OCI-LY7 (cell line): ENCODE measurements at regions of chr20 and their contacts with region 1.

Region 1: DNA sequence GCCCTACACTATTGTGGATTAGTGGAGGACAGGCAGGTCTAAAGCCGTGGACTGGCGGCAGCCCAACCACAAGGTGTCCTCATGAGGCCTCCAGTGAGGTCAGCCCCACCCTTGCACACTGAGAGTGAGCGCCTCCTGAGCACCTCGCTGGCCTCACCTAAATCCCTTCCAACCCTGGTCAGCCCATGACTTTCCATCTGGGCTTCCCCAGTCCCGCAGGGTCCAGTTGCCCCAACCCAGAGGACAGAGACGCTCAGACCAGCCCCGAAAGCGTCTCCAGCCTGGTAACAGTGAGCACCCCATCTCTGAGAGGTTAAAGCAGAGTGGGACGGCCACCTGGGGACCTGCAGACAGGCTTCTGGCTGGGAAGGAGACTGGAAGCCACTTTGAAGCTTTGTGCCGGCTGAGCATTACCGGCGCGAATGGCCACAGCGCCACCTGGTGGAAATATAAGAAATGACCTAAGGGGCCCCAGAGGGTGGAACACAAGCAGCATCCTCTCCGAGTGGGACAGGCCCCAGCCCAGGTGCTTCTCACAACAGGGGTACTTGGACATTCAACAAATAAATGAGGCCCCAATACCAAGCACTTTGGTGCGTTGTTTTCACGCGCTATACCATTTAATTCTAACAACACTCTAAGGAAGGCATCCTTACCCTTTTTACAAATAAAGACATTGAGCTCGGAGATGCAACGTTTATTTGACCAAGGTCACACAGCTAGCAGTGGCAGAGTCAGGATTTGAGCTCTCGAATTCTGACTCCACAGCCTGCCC is 65.7 kb upstream of the TOP1 start:
- DNase-seq: peak; percentile 80
- H3K4me3 ChIP-seq: no peak overlapping the region
- H3K27ac ChIP-seq: no peak overlapping the region
- H3K4me1 ChIP-seq: peaks cover 18% of the 10 kb centered on the region
- CTCF ChIP-seq: peak; percentile 95

Region 2: DNA sequence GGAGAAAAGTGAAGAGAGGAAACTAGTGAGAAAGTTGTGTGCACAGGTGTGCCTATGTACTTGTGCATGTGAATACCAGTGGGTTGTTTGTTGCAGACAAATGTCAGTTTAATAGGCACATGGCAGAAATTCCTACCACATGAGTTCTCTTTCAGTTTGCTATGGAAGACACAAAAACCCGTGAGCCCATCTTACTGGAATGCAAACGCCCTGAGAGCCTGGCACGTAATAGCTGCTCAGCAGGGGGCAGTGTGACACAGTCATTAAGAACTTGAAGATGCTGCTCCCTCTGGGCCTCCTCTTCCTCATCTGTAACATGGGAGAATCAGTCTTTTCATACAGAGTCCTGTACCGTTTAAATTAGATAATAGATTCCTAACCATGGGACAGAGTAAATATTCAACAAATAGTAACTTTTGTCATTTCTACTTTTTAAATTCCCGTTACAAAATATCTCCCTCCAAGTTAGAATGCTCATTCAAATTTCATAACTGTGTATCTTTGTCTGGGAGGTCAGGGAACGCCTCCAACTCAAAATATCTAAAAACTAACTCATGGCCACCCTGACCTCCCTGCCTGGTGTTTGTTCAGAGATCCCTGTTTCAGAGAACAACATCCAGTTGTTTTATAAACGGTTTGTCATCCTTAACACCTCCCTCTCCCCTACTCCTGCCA is 1076.8 kb before region 1 on chr20:
- CTCF ChIA-PET with region 1: no interaction called
- POLR2A ChIA-PET with region 1: no interaction called
- intact Hi-C with region 1: loop called (anchors 10 kb)
- DNase-seq: peak; percentile 41
- H3K4me3 ChIP-seq: no peak overlapping the region
- H3K27ac ChIP-seq: no peak overlapping the region
- H3K4me1 ChIP-seq: no peaks in the 10 kb centered on the region
- CTCF ChIP-seq: peak; percentile 77

Region 3: DNA sequence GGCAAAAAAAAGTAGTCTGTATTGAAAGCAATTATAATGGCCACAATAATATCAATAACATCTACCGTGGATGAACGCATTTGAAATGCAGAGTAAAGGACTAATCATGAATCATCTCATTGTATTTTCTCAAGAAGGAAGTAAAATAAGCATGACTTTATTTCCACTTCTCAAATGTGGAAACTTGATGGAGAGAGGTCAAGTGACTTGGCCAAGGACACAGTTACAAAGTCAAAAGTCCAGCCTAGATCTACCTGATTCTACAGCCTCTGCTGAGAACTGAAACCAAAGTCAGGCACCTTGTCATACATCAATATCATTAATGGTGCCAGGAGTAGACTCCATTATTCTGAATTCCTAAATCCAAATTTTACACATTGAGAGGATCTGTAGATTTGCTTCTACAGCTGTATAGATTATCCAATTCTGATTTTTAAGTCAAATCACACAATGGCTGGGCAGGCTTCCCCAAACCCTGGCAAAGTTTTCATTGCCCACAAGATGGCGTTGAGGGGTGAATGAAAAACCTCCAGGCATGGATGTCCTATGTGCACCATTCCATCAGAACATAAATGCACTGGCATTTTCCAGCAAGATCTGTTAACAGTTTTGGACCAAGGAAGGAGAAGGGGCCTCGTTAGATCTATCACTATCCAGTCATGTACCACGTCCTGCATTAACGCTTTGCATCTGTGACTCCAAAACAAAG is 696.9 kb before region 1 on chr20:
- CTCF ChIA-PET with region 1: no interaction called
- POLR2A ChIA-PET with region 1: no interaction called
- intact Hi-C with region 1: loop called (anchors 10 kb)
- DNase-seq: peak; percentile 18
- H3K4me3 ChIP-seq: no peak overlapping the region
- H3K27ac ChIP-seq: no peak overlapping the region
- H3K4me1 ChIP-seq: no peaks in the 10 kb centered on the region
- CTCF ChIP-seq: peak; percentile 68

Region 4: DNA sequence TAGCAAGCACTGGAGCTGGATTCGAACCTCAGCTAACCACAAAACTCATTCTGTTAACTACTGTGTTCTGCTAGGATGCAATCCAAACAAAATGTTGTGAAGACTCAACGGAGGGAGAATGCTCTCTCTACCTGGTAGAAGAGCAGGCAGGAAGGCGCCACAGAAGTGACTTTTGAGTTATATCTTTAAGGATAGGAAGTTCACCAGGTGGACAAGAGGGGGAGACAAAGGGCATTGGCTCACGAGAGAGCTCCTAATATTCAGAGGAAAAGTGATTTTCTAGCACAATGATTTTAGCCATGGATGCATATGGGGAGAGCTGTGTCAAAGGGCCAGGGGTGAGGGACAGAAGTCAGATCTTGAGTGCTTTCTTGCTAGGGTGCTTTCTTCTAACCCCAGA is 165.5 kb before region 1 on chr20:
- CTCF ChIA-PET with region 1: interaction called, 5 read pairs
- POLR2A ChIA-PET with region 1: interaction called, 3 read pairs
- intact Hi-C with region 1: loop called (anchors 5 kb)
- DNase-seq: peak; percentile 61
- H3K4me3 ChIP-seq: no peak overlapping the region
- H3K27ac ChIP-seq: no peak overlapping the region
- H3K4me1 ChIP-seq: no peaks in the 10 kb centered on the region
- CTCF ChIP-seq: peak; percentile 86

Region 5: GRCh38 chr20:40860487-40860902 is 102.4 kb before region 1 on chr20:
- CTCF ChIA-PET with region 1: no interaction called
- POLR2A ChIA-PET with region 1: no interaction called
- intact Hi-C with region 1: no loop called
- DNase-seq: no peak
- H3K4me3 ChIP-seq: no peak overlapping the region
- H3K27ac ChIP-seq: no peak overlapping the region
- H3K4me1 ChIP-seq: no peaks in the 10 kb centered on the region
- CTCF ChIP-seq: no peak

Region 6: GRCh38 chr20:40913224-40914185 is 49.4 kb before region 1 on chr20:
- CTCF ChIA-PET with region 1: no interaction called
- POLR2A ChIA-PET with region 1: no interaction called
- intact Hi-C with region 1: no loop called
- DNase-seq: no peak
- H3K4me3 ChIP-seq: no peak overlapping the region
- H3K27ac ChIP-seq: no peak overlapping the region
- H3K4me1 ChIP-seq: peaks cover 7% of the 10 kb centered on the region
- CTCF ChIP-seq: no peak

Region 7: GRCh38 chr20:41078329-41078728 is 115.4 kb after region 1 on chr20:
- CTCF ChIA-PET with region 1: no interaction called
- POLR2A ChIA-PET with region 1: interaction called, 3 read pairs
- intact Hi-C with region 1: loop called (anchors 1 kb)
- DNase-seq: peak; percentile 70
- H3K4me3 ChIP-seq: no peak overlapping the region
- H3K27ac ChIP-seq: peak overlapping the region; percentile 27
- H3K4me1 ChIP-seq: peaks cover 40% of the 10 kb centered on the region
- CTCF ChIP-seq: peak; percentile 81

Region 8: DNA sequence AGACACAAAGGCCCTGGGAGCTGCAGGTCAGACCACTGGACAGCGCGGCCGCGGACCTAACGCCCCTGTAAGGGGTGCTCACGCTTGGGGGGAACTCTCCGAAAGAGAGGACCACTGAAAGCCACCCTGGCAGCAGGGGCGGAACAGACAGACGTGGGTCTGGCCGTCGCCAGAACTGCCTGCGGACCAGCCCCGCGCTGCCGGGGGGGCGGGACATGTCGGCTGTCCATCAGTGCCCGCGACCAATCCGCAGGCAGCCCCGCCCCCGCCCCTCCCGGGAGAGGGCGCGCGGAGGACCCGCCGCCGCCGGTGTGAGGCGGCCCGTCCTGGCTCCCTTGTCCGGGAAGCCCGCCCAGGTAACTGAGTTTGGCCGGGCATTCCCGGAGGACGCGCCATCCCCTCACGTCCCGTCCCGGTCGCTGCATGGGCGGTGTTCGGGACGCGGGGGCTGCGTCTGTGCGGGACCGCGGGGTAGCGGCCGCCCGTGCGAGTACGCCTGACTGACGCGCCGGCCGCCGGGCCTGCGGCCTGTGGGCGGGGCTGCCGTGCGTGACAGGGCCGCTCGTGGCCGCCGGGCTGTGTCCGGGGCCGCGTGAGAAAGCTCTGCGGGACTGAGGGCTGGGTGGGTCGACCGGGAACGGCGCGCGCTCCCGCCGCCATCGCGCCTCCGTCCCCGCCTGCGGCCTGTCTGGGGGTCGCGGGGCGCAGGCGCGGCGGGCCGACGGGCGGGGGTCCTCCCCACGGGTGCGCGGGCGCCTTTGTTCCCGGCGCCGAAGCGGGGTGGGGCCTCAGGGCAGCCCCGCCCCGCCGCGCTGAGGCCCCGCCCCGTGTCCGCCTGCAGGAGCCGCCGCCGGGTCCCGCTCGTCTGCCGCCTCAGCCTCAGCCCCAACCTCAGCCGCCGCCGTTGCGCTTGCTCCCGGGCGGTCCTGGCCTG is 174.0 kb after region 1 on chr20 and contains the start of gene PLCG1:
- CTCF ChIA-PET with region 1: interaction called, 3 read pairs
- POLR2A ChIA-PET with region 1: no interaction called
- intact Hi-C with region 1: loop called (anchors 2 kb)
- DNase-seq: peak; percentile 88
- H3K4me3 ChIP-seq: peak within 1 kb of the TSS; percentile 74
- H3K27ac ChIP-seq: peak within 1 kb of the TSS; percentile 73
- H3K4me1 ChIP-seq: peaks cover 59% of the 10 kb centered on the region
- CTCF ChIP-seq: no peak
- total RNA-seq, gene PLCG1: 92.6 and 103 TPM in 2 replicates

Region 9: DNA sequence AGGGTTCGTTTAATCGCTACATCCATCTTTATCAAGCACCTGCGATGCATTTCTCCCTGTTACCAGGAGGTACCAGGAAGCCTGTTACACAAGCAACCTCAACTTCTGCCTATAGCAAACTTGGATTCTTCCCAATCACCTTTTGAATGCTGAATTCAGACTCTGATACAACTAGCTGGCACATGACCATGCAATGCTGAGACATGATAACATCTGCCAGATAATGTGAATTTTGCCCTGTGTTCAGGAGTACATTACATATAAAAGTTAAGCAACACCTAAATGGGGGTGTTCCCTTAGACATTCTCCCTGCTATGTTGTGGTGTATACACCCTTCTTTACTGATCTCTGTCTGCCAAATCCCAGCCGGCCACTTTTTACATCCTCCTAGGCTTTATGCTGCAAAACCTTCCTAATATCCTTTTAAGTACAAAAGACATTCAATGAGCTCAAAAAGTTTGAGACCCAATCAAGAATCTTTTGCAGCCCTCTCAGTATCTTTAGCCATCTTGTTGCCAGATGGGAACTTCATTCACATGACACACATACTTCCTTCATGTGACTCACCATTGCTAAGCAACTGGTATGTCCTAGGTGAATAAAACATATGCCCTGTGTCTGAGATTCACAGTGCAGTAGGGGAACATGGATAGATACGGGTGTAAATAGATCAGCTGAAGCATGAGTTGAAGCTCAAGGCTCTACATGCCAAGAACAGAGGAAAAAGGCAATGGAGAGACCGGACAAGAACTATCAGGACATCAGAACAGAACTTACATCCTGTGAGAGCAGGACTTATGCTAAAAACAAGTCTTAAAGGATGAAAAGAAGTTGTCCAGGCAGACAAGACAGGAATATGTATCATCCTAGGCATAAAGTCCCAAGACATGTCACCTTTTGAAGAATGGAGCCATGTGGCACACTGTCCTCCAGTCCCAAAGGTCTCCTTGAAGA is 270.3 kb after region 1 on chr20:
- CTCF ChIA-PET with region 1: no interaction called
- POLR2A ChIA-PET with region 1: no interaction called
- intact Hi-C with region 1: loop called (anchors 5 kb)
- DNase-seq: no peak
- H3K4me3 ChIP-seq: no peak overlapping the region
- H3K27ac ChIP-seq: no peak overlapping the region
- H3K4me1 ChIP-seq: no peaks in the 10 kb centered on the region
- CTCF ChIP-seq: no peak

Region 10: DNA sequence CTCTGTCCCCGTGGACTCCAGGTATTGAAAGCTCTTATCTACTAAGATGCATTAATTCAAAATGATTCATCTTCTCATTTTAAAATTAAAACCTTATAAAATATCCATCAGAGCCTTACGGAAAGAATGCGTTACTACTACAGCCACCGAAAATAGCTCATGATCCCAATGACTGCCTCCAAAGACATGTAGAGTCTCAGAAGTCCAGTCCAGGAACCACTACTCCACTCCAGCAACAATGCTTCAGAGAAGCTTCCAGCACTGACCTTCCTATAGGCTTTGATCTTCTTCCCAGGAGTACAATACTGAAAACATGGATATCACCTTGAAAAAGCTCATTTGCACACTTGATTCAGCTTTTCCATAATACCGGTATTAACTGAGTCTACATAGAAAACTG is 560.9 kb after region 1 on chr20:
- CTCF ChIA-PET with region 1: no interaction called
- POLR2A ChIA-PET with region 1: no interaction called
- intact Hi-C with region 1: no loop called
- DNase-seq: no peak
- H3K4me3 ChIP-seq: no peak overlapping the region
- H3K27ac ChIP-seq: no peak overlapping the region
- H3K4me1 ChIP-seq: no peaks in the 10 kb centered on the region
- CTCF ChIP-seq: no peak